Activated CD8-positive, alpha-beta T cell treated with anti-CD3 and anti-CD28 coated beads, Interleukin-2, amount 10 ng/mL, durations not matched to agents 7 days and 5 days (primary cell): ENCODE measurements at regions of chr11 and their contacts with region 1.

Region 1: GRCh38 chr11:124673333-124674167 is at the starts of genes SIAE and SPA17:
- DNase-seq: peak; percentile 90
- ATAC-seq: peak; percentile 92
- H3K4me3 Mint-ChIP-seq: peak within 1 kb of the TSS; percentile 86
- H3K27ac Mint-ChIP-seq: peak within 1 kb of the TSS; percentile 89
- H3K4me1 Mint-ChIP-seq: peaks cover 34% of the 10 kb centered on the region
- H3K27me3 Mint-ChIP-seq: no peaks in the 10 kb centered on the region
- total RNA-seq, gene SIAE: 4.8 to 5.7 TPM
- total RNA-seq, gene SPA17: 2.6 TPM

Region 2: DNA sequence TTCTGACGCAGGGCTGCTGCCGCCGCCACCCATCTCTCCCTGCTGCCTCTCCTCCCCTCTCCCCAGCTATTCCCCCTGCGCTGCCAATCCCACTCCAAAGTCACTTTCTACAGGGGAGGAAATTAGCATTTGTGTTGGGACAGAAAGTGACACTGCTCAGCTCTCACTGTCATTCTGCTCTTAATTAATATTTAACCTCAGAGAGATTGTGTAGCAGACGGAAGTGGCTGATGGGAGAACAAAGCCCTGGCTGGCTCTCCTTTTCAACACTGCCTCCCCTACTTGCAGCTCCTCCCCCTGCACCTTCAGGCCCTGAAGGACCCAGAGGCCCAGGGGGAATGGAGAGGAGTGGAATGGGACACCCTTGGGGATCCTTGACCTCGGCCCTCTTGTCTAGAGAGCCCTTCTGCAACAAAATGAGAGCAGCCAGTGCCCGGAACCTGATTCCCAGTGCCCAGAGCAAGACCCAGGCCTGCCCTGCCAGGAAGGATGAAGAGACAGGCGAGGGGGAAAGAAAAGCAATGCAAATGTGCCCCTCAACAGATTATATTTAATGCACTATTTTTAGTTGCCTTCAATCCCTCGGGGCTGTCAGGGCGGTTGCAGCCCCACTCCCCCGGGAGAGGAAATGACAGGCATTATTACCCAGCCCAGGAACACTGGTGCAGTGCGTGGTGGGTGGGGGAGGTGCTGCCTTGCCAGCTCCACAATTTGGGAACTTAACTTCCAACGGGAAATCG is 51.6 kb after region 1 on chr11:
- CTCF ChIA-PET with region 1: interaction called, 11 read pairs
- POLR2A ChIA-PET with region 1: no interaction called
- DNase-seq: no peak
- ATAC-seq: no peak
- H3K4me3 Mint-ChIP-seq: no peak overlapping the region
- H3K27ac Mint-ChIP-seq: no peak overlapping the region
- H3K4me1 Mint-ChIP-seq: peaks cover 11% of the 10 kb centered on the region
- H3K27me3 Mint-ChIP-seq: peaks cover 48% of the 10 kb centered on the region

Region 3: GRCh38 chr11:124746621-124747243 is 73.2 kb after region 1 on chr11:
- CTCF ChIA-PET with region 1: interaction called, 29 read pairs
- POLR2A ChIA-PET with region 1: interaction called, 3 read pairs
- DNase-seq: peak; percentile 81
- ATAC-seq: peak; percentile 92
- H3K4me3 Mint-ChIP-seq: peak overlapping the region; percentile 88
- H3K27ac Mint-ChIP-seq: peak overlapping the region; percentile 84
- H3K4me1 Mint-ChIP-seq: peaks cover 25% of the 10 kb centered on the region
- H3K27me3 Mint-ChIP-seq: peaks cover 22% of the 10 kb centered on the region

Region 4: GRCh38 chr11:124769801-124770639 is 96.5 kb after region 1 on chr11:
- CTCF ChIA-PET with region 1: interaction called, 108 read pairs
- POLR2A ChIA-PET with region 1: interaction called, 3 read pairs
- DNase-seq: no peak
- ATAC-seq: no peak
- H3K4me3 Mint-ChIP-seq: no peak overlapping the region
- H3K27ac Mint-ChIP-seq: no peak overlapping the region
- H3K4me1 Mint-ChIP-seq: no peaks in the 10 kb centered on the region
- H3K27me3 Mint-ChIP-seq: no peaks in the 10 kb centered on the region

Region 5: DNA sequence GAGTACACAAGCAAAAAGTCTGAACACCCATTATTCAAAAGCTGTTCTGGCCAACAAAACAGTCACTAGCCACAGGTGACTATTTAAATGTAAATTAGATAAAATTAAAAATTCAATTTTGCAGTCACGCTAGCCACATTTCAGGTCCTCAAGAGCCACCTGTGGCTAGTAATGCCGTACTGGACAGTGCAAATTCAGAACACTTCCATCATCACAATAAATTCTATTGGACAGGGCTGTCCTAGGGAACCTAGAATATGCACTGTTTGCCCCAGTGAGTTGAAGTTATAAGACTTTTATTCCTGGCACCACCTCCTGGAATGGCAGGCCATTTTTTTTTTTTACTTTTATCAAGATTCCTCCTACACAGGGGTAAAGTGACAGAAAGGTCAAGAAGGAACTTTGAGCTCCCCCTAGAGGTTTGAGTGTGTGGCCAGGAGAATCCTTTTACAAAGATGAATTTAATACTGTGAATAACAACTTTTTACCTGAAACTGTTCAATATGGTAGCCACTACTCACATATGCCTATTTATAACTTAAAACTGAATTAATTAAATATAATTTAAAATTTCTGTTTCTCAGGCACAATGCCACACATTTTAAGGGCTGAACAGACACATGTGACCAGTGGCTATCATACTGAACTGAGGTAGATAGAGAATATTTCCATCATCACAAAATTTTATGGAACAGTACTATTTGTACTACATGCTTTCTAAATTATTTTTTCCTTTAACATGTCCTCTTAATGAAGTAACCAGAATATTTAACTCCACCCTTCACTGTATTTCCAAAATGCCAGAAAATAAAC is 120.1 kb after region 1 on chr11:
- CTCF ChIA-PET with region 1: interaction called, 47 read pairs
- POLR2A ChIA-PET with region 1: interaction called, 4 read pairs
- DNase-seq: peak; percentile 44
- ATAC-seq: peak; percentile 64
- H3K4me3 Mint-ChIP-seq: no peak overlapping the region
- H3K27ac Mint-ChIP-seq: no peak overlapping the region
- H3K4me1 Mint-ChIP-seq: peaks cover 34% of the 10 kb centered on the region
- H3K27me3 Mint-ChIP-seq: no peaks in the 10 kb centered on the region

Region 6: DNA sequence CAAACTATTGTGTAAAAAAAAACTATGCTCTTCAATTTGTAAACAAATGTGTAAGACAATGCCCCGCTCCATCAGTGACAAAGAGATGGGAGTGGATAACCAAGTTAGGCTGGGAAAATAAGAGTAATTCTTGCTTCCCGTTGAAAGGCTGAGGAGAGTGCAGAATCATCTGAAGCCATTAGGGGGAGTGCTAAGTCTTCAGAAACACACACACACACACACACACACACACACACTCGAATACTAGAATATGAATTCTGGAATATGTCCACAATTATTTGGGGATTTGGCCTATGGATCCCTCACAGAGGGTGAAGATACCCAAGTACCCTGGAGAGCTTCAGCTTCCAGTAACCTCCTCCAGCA is 163.9 kb after region 1 on chr11:
- CTCF ChIA-PET with region 1: interaction called, 57 read pairs
- POLR2A ChIA-PET with region 1: no interaction called
- DNase-seq: no peak
- ATAC-seq: peak; percentile 29
- H3K4me3 Mint-ChIP-seq: no peak overlapping the region
- H3K27ac Mint-ChIP-seq: no peak overlapping the region
- H3K4me1 Mint-ChIP-seq: peaks cover 24% of the 10 kb centered on the region
- H3K27me3 Mint-ChIP-seq: peaks cover 61% of the 10 kb centered on the region